Activated CD4-positive, alpha-beta memory T cell treated with anti-CD3 and anti-CD28 coated beads for 36 hours (primary cell): ENCODE measurements at regions of chr11 and their contacts with region 1.

Region 1: GRCh38 chr11:118928108-118928870 is 2.6 kb upstream of the BCL9L start:
- DNase-seq: peak; percentile 95
- H3K4me3 Mint-ChIP-seq: peak overlapping the region; percentile 94
- H3K27ac Mint-ChIP-seq: peak overlapping the region; percentile 98
- H3K4me1 Mint-ChIP-seq: peaks cover 44% of the 10 kb centered on the region
- H3K27me3 Mint-ChIP-seq: no peaks in the 10 kb centered on the region

Region 2: GRCh38 chr11:118689851-118690552 is 238.3 kb before region 1 on chr11:
- CTCF ChIA-PET with region 1: interaction called, 38 read pairs
- POLR2A ChIA-PET with region 1: no interaction called
- intact Hi-C with region 1: loop called (anchors 1 kb)
- DNase-seq: peak; percentile 94
- H3K4me3 Mint-ChIP-seq: peak overlapping the region; percentile 79
- H3K27ac Mint-ChIP-seq: peak overlapping the region; percentile 70
- H3K4me1 Mint-ChIP-seq: peaks cover 39% of the 10 kb centered on the region
- H3K27me3 Mint-ChIP-seq: peaks cover 2% of the 10 kb centered on the region

Region 3: GRCh38 chr11:118878163-118878563 is 50.1 kb before region 1 on chr11:
- CTCF ChIA-PET with region 1: interaction called, 12 read pairs
- POLR2A ChIA-PET with region 1: interaction called, 3 read pairs
- intact Hi-C with region 1: loop called (anchors 1 kb)
- DNase-seq: peak; percentile 60
- H3K4me3 Mint-ChIP-seq: peak overlapping the region; percentile 41
- H3K27ac Mint-ChIP-seq: peak overlapping the region; percentile 98
- H3K4me1 Mint-ChIP-seq: peaks cover 93% of the 10 kb centered on the region
- H3K27me3 Mint-ChIP-seq: no peaks in the 10 kb centered on the region

Region 4: DNA sequence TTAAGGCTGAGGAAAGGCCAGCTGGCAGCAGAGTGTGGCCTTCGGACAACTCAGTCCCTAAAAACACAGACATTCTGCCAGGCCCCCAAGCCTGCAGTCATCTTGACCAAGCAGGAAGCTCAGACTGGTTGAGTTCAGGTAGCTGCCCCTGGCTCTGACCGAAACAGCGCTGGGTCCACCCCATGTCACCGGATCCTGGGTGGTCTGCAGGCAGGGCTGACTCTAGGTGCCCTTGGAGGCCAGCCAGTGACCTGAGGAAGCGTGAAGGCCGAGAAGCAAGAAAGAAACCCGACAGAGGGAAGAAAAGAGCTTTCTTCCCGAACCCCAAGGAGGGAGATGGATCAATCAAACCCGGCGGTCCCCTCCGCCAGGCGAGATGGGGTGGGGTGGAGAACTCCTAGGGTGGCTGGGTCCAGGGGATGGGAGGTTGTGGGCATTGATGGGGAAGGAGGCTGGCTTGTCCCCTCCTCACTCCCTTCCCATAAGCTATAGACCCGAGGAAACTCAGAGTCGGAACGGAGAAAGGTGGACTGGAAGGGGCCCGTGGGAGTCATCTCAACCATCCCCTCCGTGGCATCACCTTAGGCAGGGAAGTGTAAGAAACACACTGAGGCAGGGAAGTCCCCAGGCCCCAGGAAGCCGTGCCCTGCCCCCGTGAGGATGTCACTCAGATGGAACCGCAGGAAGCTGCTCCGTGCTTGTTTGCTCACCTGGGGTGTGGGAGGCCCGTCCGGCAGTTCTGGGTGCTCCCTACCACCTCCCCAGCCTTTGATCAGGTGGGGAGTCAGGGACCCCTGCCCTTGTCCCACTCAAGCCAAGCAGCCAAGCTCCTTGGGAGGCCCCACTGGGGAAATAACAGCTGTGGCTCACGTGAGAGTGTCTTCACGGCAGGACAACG is 32.9 kb before region 1 on chr11:
- CTCF ChIA-PET with region 1: interaction called, 11 read pairs
- POLR2A ChIA-PET with region 1: interaction called, 3 read pairs
- intact Hi-C with region 1: loop called (anchors 5 kb)
- DNase-seq: peak; percentile 89
- H3K4me3 Mint-ChIP-seq: peak overlapping the region; percentile 58
- H3K27ac Mint-ChIP-seq: peak overlapping the region; percentile 93
- H3K4me1 Mint-ChIP-seq: peaks cover 71% of the 10 kb centered on the region
- H3K27me3 Mint-ChIP-seq: no peaks in the 10 kb centered on the region

Region 5: GRCh38 chr11:118939953-118940598 is 11.8 kb after region 1 on chr11:
- CTCF ChIA-PET with region 1: interaction called, 35 read pairs
- POLR2A ChIA-PET with region 1: interaction called, 10 read pairs
- intact Hi-C with region 1: loop called (anchors 1 kb)
- DNase-seq: peak; percentile 82
- H3K4me3 Mint-ChIP-seq: peak overlapping the region; percentile 46
- H3K27ac Mint-ChIP-seq: peak overlapping the region; percentile 42
- H3K4me1 Mint-ChIP-seq: peaks cover 36% of the 10 kb centered on the region
- H3K27me3 Mint-ChIP-seq: no peaks in the 10 kb centered on the region

Region 6: DNA sequence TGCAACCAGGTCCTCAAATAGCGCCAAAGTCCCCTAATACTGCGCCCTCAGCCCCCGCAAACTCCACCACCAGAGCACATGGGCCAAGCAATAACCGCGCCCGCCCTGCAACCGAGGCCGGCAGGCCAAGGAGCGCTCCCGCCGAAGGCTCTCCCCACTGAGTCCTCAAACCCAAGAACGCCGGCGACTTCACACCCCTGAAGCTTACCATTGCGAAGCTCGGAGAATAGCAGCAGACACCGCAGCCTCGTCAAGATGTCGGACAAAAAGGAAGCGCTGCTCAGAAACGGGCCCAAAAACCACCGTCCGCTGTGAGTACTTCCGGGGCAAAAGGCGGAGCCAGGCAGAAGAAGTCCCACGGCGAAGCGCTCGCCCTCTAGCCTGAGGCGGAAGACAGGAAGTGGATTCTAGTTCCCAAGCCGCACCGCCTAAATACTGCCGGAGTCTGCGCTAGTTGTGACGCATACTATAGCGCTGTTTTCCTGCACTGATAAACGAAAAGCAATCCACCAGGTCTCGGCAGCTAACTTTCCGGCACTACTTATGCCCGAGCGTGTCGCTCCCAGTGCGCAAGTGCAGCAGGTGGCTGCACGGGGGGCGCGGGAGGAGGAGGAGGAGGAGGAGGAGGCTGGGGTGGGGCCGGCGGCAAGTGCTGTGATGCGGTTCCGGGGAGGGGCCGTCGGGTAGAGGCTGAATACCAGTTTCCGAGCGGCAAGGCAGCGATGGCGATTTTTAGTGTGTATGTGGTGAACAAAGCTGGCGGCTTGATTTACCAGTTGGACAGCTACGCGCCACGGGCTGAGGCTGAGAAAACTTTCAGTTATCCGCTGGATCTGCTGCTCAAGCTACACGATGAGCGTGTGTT is 90.0 kb after region 1 on chr11 and contains the starts of genes RPS25 and TRAPPC4:
- CTCF ChIA-PET with region 1: no interaction called
- POLR2A ChIA-PET with region 1: no interaction called
- intact Hi-C with region 1: loop called (anchors 5 kb)
- DNase-seq: peak; percentile 98
- H3K4me3 Mint-ChIP-seq: peak within 1 kb of the TSS; percentile 99
- H3K27ac Mint-ChIP-seq: peak within 1 kb of the TSS; percentile 99
- H3K4me1 Mint-ChIP-seq: peaks cover 54% of the 10 kb centered on the region
- H3K27me3 Mint-ChIP-seq: no peaks in the 10 kb centered on the region
- total RNA-seq, gene RPS25: 1,852 to 1,922 TPM
- total RNA-seq, gene TRAPPC4: 86.4 to 87.8 TPM

Region 7: GRCh38 chr11:119295178-119295577 is 366.9 kb after region 1 on chr11:
- CTCF ChIA-PET with region 1: no interaction called
- POLR2A ChIA-PET with region 1: no interaction called
- intact Hi-C with region 1: no loop called
- DNase-seq: no peak
- H3K4me3 Mint-ChIP-seq: no peak overlapping the region
- H3K27ac Mint-ChIP-seq: no peak overlapping the region
- H3K4me1 Mint-ChIP-seq: no peaks in the 10 kb centered on the region
- H3K27me3 Mint-ChIP-seq: no peaks in the 10 kb centered on the region